AG04450 (cell line): ENCODE measurements at regions of chr7 and their contacts with region 1.

Region 1: DNA sequence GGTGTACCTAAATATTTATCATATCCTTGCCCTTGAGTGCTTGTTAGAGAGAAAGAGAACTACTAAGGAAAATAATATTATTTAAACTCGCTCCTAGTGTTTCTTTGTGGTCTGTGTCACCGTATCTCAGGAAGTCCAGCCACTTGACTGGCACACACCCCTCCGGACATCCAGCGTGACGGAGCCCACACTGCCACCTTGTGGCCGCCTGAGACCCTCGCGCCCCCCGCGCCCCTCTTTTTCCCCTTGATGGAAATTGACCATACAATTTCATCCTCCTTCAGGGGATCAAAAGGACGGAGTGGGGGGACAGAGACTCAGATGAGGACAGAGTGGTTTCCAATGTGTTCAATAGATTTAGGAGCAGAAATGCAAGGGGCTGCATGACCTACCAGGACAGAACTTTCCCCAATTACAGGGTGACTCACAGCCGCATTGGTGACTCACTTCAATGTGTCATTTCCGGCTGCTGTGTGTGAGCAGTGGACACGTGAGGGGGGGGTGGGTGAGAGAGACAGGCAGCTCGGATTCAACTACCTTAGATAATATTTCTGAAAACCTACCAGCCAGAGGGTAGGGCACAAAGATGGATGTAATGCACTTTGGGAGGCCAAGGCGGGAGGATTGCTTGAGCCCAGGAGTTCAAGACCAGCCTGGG is 11.4 kb downstream of the SERPINE1 start:
- DNase-seq: peak; percentile 89
- H3K4me3 ChIP-seq: no peak overlapping the region
- H3K27ac ChIP-seq: peak overlapping the region; percentile 81
- H3K27me3 ChIP-seq: no peaks in the 10 kb centered on the region
- CTCF ChIP-seq: peak; percentile 69

Region 2: DNA sequence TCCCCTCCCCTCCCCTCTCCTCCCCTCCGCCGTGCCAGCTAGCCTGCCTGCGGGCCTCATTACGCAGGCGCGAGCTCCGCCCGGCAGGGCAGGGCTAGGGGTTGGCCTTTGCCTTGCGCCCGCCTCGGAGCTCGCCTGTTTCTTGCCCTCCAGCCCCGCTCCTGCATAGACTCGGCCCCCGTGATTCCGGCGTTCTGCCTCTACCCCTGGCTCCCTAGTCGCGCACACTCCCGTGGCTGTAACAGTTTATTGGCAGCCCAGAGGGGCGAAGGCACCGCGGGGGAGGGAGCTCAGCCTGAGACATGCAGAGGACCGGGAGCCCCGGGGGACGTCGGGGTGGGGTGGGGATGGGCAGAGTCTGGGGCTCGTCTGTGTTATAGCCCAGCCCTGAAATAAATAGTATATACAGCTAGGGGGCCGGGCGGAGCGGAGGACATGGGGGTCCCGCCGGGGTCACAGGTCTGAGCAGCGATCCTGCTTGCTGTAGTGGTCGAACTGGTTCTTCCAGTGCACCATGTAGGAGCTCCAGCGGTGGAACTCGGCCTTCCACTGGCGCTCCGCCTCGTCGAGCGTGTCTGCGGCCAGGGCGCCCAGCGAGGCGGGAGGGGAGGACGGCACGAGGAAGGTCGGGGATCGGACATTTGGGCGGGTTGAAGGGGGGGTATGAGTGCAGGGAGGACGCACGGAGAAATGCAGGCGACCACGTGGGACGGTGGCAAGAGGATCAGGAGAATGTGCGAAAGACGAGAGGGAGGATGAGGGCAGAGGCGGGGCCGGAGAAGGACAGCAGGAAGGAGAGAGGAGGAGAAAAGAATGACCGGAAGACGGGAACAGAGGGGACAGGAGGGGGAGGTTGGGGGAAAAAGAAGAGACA is 248.3 kb before region 1 on chr7:
- CTCF ChIA-PET with region 1: interaction called, 13 read pairs
- POLR2A ChIA-PET with region 1: no interaction called
- DNase-seq: peak; percentile 85
- H3K4me3 ChIP-seq: peak overlapping the region; percentile 63
- H3K27ac ChIP-seq: peak overlapping the region; percentile 75
- H3K27me3 ChIP-seq: peaks cover 2% of the 10 kb centered on the region
- CTCF ChIP-seq: no peak

Region 3: GRCh38 chr7:101119876-101120275 is 18.5 kb before region 1 on chr7:
- CTCF ChIA-PET with region 1: interaction called, 14 read pairs
- POLR2A ChIA-PET with region 1: interaction called, 12 read pairs
- DNase-seq: no peak
- H3K4me3 ChIP-seq: no peak overlapping the region
- H3K27ac ChIP-seq: peak overlapping the region; percentile 31
- H3K27me3 ChIP-seq: no peaks in the 10 kb centered on the region
- CTCF ChIP-seq: no peak

Region 4: DNA sequence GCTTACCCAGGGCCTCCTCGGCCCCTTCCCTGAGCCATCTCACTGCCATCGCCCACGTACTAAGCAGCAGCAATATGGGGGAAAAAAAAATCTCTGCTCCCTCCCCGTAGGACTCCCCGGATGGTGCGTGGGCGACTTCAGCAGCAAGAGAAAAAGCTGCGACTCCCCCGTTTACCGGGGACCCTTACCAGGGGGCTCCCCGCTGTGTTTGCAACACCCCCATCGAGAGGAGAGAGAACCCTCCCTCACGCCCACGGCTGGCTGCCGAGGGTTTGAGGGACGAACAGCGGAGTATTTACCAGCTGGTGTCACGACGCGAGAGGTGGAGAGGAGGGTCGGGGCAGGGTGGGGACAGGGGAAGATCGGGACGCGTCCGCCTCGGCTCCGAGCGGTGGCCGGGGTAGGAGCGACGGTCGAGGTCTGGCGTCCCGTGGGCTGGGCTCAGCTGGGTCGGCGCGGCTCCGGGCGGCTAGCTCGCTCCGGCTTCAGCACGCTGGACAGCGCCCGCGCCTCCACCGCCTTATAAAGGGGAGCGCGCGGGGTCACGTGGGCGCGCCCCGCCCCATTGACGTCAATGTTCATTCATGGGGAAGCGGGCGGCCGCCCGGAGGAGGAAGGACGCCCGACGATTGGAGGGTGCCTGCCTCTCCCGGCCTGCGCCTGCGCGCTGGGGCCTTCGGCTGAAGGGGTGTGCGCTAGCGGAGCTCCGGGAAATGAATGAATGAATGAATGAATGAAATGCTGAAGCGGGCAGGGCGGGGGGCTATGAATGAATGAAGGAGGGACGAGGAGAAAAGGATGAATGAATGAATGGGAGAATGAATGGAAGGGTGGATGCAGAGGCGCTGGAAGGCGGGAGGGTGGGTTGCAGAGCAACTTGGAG is 27.0 kb after region 1 on chr7 and contains the start of gene VGF:
- CTCF ChIA-PET with region 1: interaction called, 21 read pairs
- POLR2A ChIA-PET with region 1: no interaction called
- DNase-seq: peak; percentile 84
- H3K4me3 ChIP-seq: peak within 1 kb of the TSS; percentile 48
- H3K27ac ChIP-seq: peak within 1 kb of the TSS; percentile 2
- H3K27me3 ChIP-seq: peaks cover 8% of the 10 kb centered on the region
- CTCF ChIP-seq: no peak
- polyA plus RNA-seq, gene VGF: 0.16 and 0.38 TPM in 2 replicates

Region 5: DNA sequence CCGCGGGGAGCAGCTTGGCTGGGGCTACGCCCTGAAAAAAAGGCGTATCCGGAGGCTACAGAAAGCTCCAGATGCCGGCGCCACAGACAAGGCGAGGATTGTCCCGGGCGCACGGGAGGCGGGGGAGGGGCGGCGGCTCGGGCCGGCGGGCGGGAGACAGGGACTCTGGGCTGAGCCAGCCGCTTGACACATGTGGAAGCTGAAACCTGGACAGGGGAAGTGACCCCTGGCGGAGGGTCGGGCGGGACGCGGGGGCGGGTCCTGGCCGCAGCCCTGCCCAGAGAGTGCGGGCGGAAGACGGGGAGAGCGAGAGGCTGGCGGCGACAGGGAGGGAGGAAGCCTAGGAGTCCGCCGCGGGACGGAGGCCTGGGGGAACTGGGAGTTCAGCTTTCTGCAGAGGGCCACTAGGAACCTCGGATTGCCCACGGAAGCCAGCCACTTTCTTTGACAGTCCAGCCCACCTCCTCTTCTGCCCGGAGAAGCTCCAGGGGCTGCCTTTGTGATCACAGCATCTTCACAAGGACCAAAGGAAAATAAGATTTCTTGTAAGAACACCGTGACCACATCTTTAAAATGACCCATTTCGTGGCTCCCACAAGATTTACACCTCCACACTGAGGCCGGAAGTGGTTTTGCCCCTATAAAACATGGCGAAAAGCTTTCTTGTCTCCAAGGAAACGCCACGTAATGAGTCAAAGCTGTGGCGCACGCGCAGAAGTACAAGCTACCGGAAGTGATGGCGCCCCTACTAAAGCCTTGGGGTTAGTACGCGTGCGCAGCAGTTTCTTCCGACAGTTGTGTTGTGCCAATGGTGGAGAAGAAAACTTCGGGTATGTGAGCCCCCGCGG is 79.3 kb after region 1 on chr7 and contains the starts of genes PLOD3 and ZNHIT1:
- CTCF ChIA-PET with region 1: interaction called, 26 read pairs
- POLR2A ChIA-PET with region 1: interaction called, 5 read pairs
- DNase-seq: peak; percentile 95
- H3K4me3 ChIP-seq: peak within 1 kb of the TSS; percentile 92
- H3K27ac ChIP-seq: peak within 1 kb of the TSS; percentile 96
- H3K27me3 ChIP-seq: no peaks in the 10 kb centered on the region
- CTCF ChIP-seq: 0 out of 2 replicates have a peak, but pooled peaks have one; percentile 11
- polyA plus RNA-seq, gene PLOD3: 60.6 and 86.9 TPM in 2 replicates
- polyA plus RNA-seq, gene ZNHIT1: 36.0 and 46.2 TPM in 2 replicates

Region 6: GRCh38 chr7:101287032-101287431 is 148.7 kb after region 1 on chr7:
- CTCF ChIA-PET with region 1: interaction called, 94 read pairs
- POLR2A ChIA-PET with region 1: interaction called, 11 read pairs
- DNase-seq: no peak
- H3K4me3 ChIP-seq: no peak overlapping the region
- H3K27ac ChIP-seq: no peak overlapping the region
- H3K27me3 ChIP-seq: peaks cover 17% of the 10 kb centered on the region
- CTCF ChIP-seq: no peak